ENCODE measurements at regions of chr12 and their contacts with region 1.

Region 1: DNA sequence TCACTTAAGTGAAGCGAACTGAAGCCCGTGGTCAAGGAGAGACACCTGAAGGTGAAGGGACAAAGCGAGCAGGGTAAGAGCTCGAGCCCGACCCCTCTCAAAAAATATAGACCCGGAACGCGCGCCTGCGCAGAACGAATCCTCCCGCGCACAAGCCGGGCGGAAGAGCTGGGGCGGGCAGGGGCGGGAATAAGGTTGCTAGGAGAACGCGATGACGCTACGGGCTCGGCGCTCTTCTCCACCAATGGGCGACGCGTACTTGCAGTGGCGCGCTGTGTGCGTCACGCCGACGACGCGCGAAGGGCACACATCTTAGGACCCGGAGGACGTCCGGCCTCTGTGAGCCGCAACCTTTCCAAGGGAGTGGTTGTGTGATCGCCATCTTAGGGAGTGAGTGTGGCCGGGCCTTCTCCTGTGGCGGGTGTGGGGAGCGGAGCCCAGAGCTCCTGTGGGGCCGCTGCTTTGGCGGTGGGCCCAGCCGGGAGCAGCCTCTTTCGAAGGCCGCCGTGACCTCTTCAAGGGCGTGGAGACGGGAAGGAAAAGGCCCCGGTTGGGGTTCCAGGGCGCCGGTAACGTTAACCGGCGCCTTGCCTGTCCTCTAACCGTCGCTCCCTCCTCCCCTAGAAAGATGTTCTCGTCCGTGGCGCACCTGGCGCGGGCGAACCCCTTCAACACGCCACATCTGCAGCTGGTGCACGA is at the start of gene SLC25A3:
- DNase-seq: peak; percentile 95 to 98 (median 96)
- ATAC-seq: peak; percentile 96
- H3K4me3 ChIP-seq: peak within 1 kb of the TSS; percentile 100
- H3K27ac ChIP-seq: peak within 1 kb of the TSS; percentile 98
- H3K4me1 ChIP-seq: peaks cover 16 to 18% of the 10 kb centered on the region in 2 experiments; a peak in 4 of 5 replicates
- H3K27me3 ChIP-seq: no peaks in the 10 kb centered on the region
- CTCF ChIP-seq: 0 out of 6 replicates have a peak, but pooled peaks of 2 of the 3 experiments have one; percentile 9 to 19
- EP300 ChIP-seq: peak; percentile 37; the same call in 1 of the 2 replicates
- POLR2A ChIP-seq: peak; percentile 98
- RAD21 ChIP-seq: no peak; a peak in 1 of 4 replicates
- polyA plus RNA-seq, gene SLC25A3: 264 to 309 TPM

Region 2: DNA sequence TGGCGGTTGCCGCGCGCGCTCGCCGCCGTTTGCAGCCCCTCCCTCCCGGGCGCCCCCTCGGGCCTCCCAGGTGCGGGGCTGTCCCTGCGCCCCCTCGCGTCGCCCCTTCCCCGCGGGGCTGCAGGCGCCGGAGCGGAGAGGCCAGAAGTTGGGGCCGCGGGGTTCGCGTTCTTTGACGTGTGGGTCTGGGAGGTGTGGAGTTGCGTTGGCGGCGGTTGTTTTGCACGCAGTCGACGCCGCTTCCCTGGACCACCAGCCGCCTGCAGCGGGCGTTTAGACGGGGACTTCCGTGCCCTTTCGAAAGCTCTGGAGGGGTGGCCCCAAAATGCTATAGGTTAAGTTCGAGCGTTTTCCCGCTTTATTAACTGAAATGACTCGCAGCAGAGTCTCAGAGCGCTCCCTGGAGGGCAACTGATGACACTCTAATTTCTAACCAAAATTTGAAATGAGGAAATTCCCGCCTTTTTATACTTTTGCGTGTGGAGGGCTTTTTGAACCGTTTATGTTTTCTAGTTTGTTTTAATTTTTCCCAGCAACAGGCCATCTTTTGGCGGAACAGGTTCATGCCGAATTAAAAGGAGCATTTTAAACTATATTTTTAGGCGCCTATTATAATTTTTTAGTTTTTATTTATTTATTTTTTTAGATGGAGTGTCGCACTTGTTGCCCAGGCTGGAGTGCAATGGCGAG is 77.2 kb before region 1 on chr12:
- CTCF ChIA-PET with region 1: no interaction called
- POLR2A ChIA-PET with region 1: interaction called, 12 read pairs
- in situ Hi-C with region 1: no loop called
- intact Hi-C with region 1: loop called (anchors 5 kb)
- DNase-seq: peak in 2 of 4 experiments; percentile 73 to 94
- ATAC-seq: peak; percentile 66
- H3K4me3 ChIP-seq: peak overlapping the region; percentile 66
- H3K27ac ChIP-seq: peak overlapping the region; percentile 98
- H3K4me1 ChIP-seq: peaks cover 16 to 21% of the 10 kb centered on the region in 2 experiments; a peak in 4 of 5 replicates
- H3K27me3 ChIP-seq: no peaks in the 10 kb centered on the region
- CTCF ChIP-seq: peak; percentile 74 to 93 (median 78)
- EP300 ChIP-seq: peak; percentile 75
- POLR2A ChIP-seq: no peak; the same call in none of the 2 replicates
- RAD21 ChIP-seq: peak; percentile 71 to 88

Region 3: GRCh38 chr12:98572010-98572409 is 21.5 kb before region 1 on chr12:
- CTCF ChIA-PET with region 1: no interaction called
- POLR2A ChIA-PET with region 1: interaction called, 22 read pairs
- in situ Hi-C with region 1: no loop called
- intact Hi-C with region 1: loop called (anchors 1 kb)
- DNase-seq: peak in 3 of 4 experiments; percentile 40 to 54 (median 49)
- ATAC-seq: peak; percentile 89
- H3K4me3 ChIP-seq: no peak overlapping the region
- H3K27ac ChIP-seq: no peak overlapping the region
- H3K4me1 ChIP-seq: no peaks in the 10 kb centered on the region
- H3K27me3 ChIP-seq: no peaks in the 10 kb centered on the region
- CTCF ChIP-seq: peak; percentile 59 to 65 (median 60)
- EP300 ChIP-seq: no peak
- POLR2A ChIP-seq: no peak
- RAD21 ChIP-seq: peak in 1 of 2 experiments; percentile 37; a peak in 2 of 4 replicates

Region 4: GRCh38 chr12:98606357-98606988 is 13.0 kb after region 1 on chr12:
- CTCF ChIA-PET with region 1: no interaction called
- POLR2A ChIA-PET with region 1: interaction called, 96 read pairs
- in situ Hi-C with region 1: no loop called
- intact Hi-C with region 1: no loop called
- DNase-seq: no peak
- ATAC-seq: no peak
- H3K4me3 ChIP-seq: no peak overlapping the region
- H3K27ac ChIP-seq: no peak overlapping the region
- H3K4me1 ChIP-seq: no peaks in the 10 kb centered on the region; a peak in 1 of 5 replicates
- H3K27me3 ChIP-seq: no peaks in the 10 kb centered on the region
- CTCF ChIP-seq: peak in 1 of 3 experiments; percentile 23; a peak in 2 of 6 replicates
- EP300 ChIP-seq: no peak
- POLR2A ChIP-seq: no peak
- RAD21 ChIP-seq: peak in 1 of 2 experiments; percentile 35; a peak in 1 of 4 replicates

Region 5: GRCh38 chr12:98644711-98645402 is 51.4 kb after region 1 on chr12 and contains the starts of genes APAF1 and IKBIP:
- CTCF ChIA-PET with region 1: no interaction called
- POLR2A ChIA-PET with region 1: interaction called, 18 read pairs
- in situ Hi-C with region 1: no loop called
- intact Hi-C with region 1: loop called (anchors 1 kb)
- DNase-seq: peak; percentile 93 to 98 (median 94)
- ATAC-seq: peak; percentile 91
- H3K4me3 ChIP-seq: peak within 1 kb of the TSS; percentile 98
- H3K27ac ChIP-seq: peak within 1 kb of the TSS; percentile 93
- H3K4me1 ChIP-seq: peaks cover 3 to 11% of the 10 kb centered on the region in 2 experiments; a peak in 3 of 5 replicates
- H3K27me3 ChIP-seq: no peaks in the 10 kb centered on the region
- CTCF ChIP-seq: 0 out of 6 replicates have a peak, but pooled peaks of 1 of the 3 experiments have one; percentile 13
- EP300 ChIP-seq: 0 out of 2 replicates have a peak, but pooled peaks have one; percentile 6
- POLR2A ChIP-seq: peak; percentile 75
- RAD21 ChIP-seq: no peak
- polyA plus RNA-seq, gene APAF1: 5.1 to 6.5 TPM
- polyA plus RNA-seq, gene IKBIP: 3.3 to 4.9 TPM

Measured in K562 (cell line).